Caco-2 (cell line): ENCODE measurements at regions of chr11 and their contacts with region 1.

Region 1: GRCh38 chr11:111623527-111624030 is 21.3 kb downstream of the SIK2 start:
- DNase-seq: peak; percentile 95 to 98
- H3K4me3 ChIP-seq: no peak overlapping the region
- H3K4me3 Mint-ChIP-seq: peak overlapping the region; percentile 59
- H3K27ac Mint-ChIP-seq: peak overlapping the region; percentile 78
- H3K4me1 ChIP-seq: peaks cover 58% of the 10 kb centered on the region
- H3K4me1 Mint-ChIP-seq: peaks cover 52% of the 10 kb centered on the region
- H3K27me3 ChIP-seq: no peaks in the 10 kb centered on the region
- H3K27me3 Mint-ChIP-seq: no peaks in the 10 kb centered on the region
- CTCF ChIP-seq: no peak

Region 2: GRCh38 chr11:111541254-111542061 is 82.1 kb before region 1 on chr11:
- CTCF ChIA-PET with region 1: no interaction called
- POLR2A ChIA-PET with region 1: no interaction called
- intact Hi-C with region 1: no loop called
- DNase-seq: peak in 1 of 2 experiments; percentile 36
- H3K4me3 ChIP-seq: no peak overlapping the region
- H3K4me3 Mint-ChIP-seq: peak overlapping the region; percentile 45
- H3K27ac Mint-ChIP-seq: no peak overlapping the region
- H3K4me1 ChIP-seq: 0 out of 2 replicates have a peak, but pooled peaks cover 10% of the 10 kb centered on the region
- H3K4me1 Mint-ChIP-seq: peaks cover 7% of the 10 kb centered on the region
- H3K27me3 ChIP-seq: no peaks in the 10 kb centered on the region
- H3K27me3 Mint-ChIP-seq: no peaks in the 10 kb centered on the region
- CTCF ChIP-seq: no peak

Region 3: DNA sequence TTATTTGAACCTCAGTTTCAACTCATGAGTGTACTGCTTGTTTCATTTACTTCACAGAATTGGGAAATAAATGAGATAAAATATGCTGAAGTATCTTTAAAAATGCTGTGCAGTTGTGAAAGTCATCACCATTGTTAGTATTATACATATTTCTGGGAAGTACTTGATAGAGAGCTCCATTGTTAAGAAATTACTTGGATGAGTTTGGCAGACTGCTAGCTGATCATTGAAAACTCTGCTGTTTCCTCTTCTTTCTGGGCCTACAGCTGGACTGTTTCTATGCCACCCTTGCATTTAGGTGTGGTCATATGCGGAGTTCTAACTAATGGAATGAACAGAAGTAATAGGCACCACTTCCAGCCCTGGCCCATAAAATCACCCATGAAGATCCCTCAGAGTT is 11.4 kb before region 1 on chr11:
- CTCF ChIA-PET with region 1: interaction called, 3 read pairs
- POLR2A ChIA-PET with region 1: interaction called, 22 read pairs
- intact Hi-C with region 1: no loop called
- DNase-seq: no peak
- H3K4me3 ChIP-seq: no peak overlapping the region
- H3K4me3 Mint-ChIP-seq: no peak overlapping the region
- H3K27ac Mint-ChIP-seq: no peak overlapping the region
- H3K4me1 ChIP-seq: peaks cover 14% of the 10 kb centered on the region
- H3K4me1 Mint-ChIP-seq: peaks cover 2% of the 10 kb centered on the region
- H3K27me3 ChIP-seq: no peaks in the 10 kb centered on the region
- H3K27me3 Mint-ChIP-seq: no peaks in the 10 kb centered on the region
- CTCF ChIP-seq: no peak

Region 4: GRCh38 chr11:111688028-111688427 is 64.4 kb after region 1 on chr11:
- CTCF ChIA-PET with region 1: no interaction called
- POLR2A ChIA-PET with region 1: no interaction called
- intact Hi-C with region 1: loop called (anchors 2 kb)
- DNase-seq: no peak
- H3K4me3 ChIP-seq: no peak overlapping the region
- H3K4me3 Mint-ChIP-seq: no peak overlapping the region
- H3K27ac Mint-ChIP-seq: no peak overlapping the region
- H3K4me1 ChIP-seq: 0 out of 2 replicates have a peak, but pooled peaks cover 3% of the 10 kb centered on the region
- H3K4me1 Mint-ChIP-seq: peaks cover 25% of the 10 kb centered on the region
- H3K27me3 ChIP-seq: no peaks in the 10 kb centered on the region
- H3K27me3 Mint-ChIP-seq: no peaks in the 10 kb centered on the region
- CTCF ChIP-seq: no peak

Region 5: DNA sequence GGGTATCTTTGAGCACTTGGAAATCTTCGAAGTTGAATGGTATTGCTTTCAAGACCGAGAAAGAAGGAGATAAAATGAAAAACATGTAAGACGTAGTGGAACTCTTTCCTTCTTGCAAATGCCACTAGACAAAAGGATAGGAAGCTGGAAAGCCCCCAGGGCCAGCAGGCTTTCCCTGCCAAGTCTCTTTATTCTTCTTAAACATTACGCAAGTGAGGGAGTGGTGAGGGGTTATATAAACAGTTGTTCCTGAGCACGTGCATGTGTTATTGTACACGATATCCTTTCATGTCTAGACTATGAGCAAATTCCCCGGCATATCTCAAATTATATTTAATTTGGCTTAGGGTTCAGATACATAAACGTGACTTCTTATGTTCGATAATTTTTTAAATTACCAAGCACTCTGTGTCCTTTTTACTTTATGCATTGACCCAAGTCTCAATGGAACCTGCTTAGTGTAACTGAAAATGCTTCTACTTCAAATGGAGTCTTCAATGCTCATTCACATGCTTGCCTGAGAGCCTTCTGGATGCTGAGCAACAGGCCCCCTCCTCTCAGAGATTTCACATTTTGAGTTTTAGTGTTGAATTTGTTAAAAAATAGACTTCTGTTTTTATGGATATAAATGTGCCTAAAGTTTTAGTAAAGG is 83.6 kb after region 1 on chr11:
- CTCF ChIA-PET with region 1: no interaction called
- POLR2A ChIA-PET with region 1: no interaction called
- intact Hi-C with region 1: loop called (anchors 1 kb)
- DNase-seq: peak; percentile 63 to 73
- H3K4me3 ChIP-seq: no peak overlapping the region
- H3K4me3 Mint-ChIP-seq: no peak overlapping the region
- H3K27ac Mint-ChIP-seq: no peak overlapping the region
- H3K4me1 ChIP-seq: peaks cover 5% of the 10 kb centered on the region; the same call in 1 of the 2 replicates
- H3K4me1 Mint-ChIP-seq: peaks cover 16% of the 10 kb centered on the region
- H3K27me3 ChIP-seq: no peaks in the 10 kb centered on the region
- H3K27me3 Mint-ChIP-seq: no peaks in the 10 kb centered on the region
- CTCF ChIP-seq: no peak